HepG2 (cell line): ENCODE measurements at regions of chr10 and their contacts with region 1.

Region 1: DNA sequence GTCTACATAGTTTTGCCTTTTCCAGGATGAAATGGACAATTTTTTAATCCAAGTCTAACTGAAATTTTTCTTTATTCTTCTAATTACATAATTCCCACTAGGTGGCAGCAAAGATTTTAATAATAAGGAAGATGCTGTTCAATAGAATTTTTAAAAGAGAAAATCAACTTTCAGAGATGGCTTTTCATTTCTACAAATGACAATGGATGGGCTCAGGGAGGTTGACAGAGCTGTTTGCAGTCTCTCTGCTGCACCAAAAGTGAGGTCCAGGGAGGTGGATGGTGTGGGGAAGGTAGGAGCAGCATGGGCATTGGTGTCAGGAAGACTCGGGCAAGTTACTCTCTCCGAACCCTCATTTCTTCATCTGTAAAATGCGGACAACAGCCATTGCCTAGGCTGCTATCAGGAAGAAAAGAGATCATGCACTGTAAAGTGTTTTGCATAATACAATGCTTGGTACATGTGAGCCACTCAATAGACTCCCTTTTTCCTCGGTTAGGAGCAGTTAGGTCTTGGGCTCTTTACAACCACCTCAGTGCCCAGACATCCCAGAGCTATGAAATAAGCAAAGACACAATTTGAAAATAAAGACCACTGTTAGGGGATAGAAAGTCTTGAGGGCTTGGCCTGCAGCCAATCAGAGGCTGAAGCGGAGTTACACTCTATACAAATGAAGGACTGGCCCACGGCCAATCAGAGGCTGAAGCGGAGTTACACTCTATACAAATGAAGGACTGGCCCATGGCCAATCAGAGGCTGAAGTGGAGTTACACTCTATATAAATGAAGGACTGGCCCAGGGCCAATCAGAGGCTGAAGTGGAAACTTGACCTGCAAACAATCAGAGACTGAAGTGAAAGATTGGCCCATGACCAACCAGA is 107.1 kb downstream of the ABLIM1 start:
- DNase-seq: peak; percentile 30
- ATAC-seq: no peak
- H3K4me3 ChIP-seq: no peak overlapping the region
- H3K27ac ChIP-seq: no peak overlapping the region
- H3K4me1 ChIP-seq: peaks cover 15% of the 10 kb centered on the region
- H3K27me3 ChIP-seq: no peaks in the 10 kb centered on the region
- CTCF ChIP-seq: peak; percentile 49; the same call in 1 of the 2 replicates
- EP300 ChIP-seq: no peak
- POLR2A ChIP-seq: no peak
- RAD21 ChIP-seq: peak; percentile 31; the same call in 1 of the 2 replicates

Region 2: DNA sequence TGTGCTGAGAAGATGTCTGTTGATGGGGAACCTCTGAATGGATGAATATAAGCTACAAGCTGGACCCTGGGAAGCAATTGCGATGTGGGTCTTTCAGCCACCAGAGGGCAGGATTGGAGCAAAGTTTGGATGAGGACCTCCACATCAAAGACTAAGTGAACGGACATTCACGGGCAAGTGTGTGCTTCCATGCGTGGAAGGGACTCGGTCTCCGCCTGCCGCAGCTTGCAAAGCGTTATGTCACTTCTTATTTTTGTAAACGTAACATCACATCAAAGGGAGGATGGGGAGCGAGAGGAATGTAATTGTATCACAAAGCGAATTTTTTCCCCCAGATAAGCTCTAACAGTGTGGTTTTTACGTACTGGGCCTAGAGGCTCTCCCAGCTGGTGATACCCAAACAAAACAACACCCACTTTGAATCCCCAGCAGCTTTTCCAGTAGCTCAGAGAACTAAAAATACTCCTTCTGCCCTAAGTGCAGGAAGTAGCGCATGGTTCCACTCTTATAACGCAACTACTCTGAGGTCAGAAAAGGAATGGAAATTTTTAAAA is 246.9 kb before region 1 on chr10:
- CTCF ChIA-PET with region 1: interaction called, 9 read pairs
- POLR2A ChIA-PET with region 1: no interaction called
- in situ Hi-C with region 1: loop called (anchors 5 kb)
- intact Hi-C with region 1: loop called (anchors 1 kb)
- DNase-seq: peak; percentile 62
- ATAC-seq: peak; percentile 86
- H3K4me3 ChIP-seq: no peak overlapping the region
- H3K27ac ChIP-seq: no peak overlapping the region
- H3K4me1 ChIP-seq: peaks cover 5% of the 10 kb centered on the region; the same call in 1 of the 2 replicates
- H3K27me3 ChIP-seq: peaks cover 2 to 46% of the 10 kb centered on the region in 2 experiments
- CTCF ChIP-seq: peak; percentile 89
- EP300 ChIP-seq: no peak
- POLR2A ChIP-seq: no peak
- RAD21 ChIP-seq: peak; percentile 68

Region 3: DNA sequence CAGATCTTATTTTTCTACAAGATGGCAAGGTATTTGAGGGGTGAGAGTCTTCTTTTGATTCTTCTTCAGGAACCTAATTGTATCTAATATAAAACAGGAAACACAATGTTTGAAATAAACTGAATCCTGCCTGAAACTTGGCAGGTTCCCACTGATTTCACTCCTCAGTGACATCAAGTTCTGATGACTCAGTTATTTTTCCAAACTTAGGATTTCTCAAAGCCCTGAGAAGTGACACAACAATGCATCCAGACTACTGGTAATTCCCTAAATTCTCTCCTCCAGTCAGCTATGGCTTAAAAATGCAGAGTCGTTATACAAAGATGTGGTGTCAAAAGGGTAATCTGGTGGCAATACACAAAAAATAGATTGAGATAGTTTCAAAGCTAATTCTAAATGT is 26.1 kb after region 1 on chr10:
- CTCF ChIA-PET with region 1: no interaction called
- POLR2A ChIA-PET with region 1: no interaction called
- in situ Hi-C with region 1: no loop called
- intact Hi-C with region 1: no loop called
- DNase-seq: no peak
- ATAC-seq: no peak
- H3K4me3 ChIP-seq: no peak overlapping the region
- H3K27ac ChIP-seq: no peak overlapping the region
- H3K4me1 ChIP-seq: no peaks in the 10 kb centered on the region
- H3K27me3 ChIP-seq: no peaks in the 10 kb centered on the region
- CTCF ChIP-seq: no peak
- EP300 ChIP-seq: no peak
- POLR2A ChIP-seq: no peak
- RAD21 ChIP-seq: no peak

Region 4: DNA sequence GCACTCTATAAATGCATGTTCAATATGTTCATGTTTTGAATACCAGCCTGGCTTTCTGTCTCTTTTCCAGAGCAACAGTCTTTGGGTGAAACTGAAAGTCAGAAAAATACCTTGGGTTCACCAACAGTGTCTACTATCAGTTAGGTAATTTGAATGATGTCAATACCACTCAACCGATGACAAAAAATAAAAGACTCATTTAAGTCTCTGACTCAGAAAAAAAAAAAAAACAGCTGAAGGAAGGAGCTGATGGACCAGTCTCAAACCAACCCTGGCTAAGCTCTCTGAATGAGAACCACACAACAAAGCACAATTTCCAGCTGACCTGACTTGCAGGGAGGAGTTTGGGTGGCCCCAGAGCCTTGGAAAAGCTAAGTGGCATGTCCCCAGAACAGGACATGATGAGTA is 64.6 kb after region 1 on chr10:
- CTCF ChIA-PET with region 1: no interaction called
- POLR2A ChIA-PET with region 1: no interaction called
- in situ Hi-C with region 1: no loop called
- intact Hi-C with region 1: no loop called
- DNase-seq: no peak
- ATAC-seq: no peak
- H3K4me3 ChIP-seq: no peak overlapping the region
- H3K27ac ChIP-seq: no peak overlapping the region
- H3K4me1 ChIP-seq: peaks cover 33% of the 10 kb centered on the region
- H3K27me3 ChIP-seq: no peaks in the 10 kb centered on the region
- CTCF ChIP-seq: no peak
- EP300 ChIP-seq: no peak
- POLR2A ChIP-seq: no peak
- RAD21 ChIP-seq: no peak

Region 5: DNA sequence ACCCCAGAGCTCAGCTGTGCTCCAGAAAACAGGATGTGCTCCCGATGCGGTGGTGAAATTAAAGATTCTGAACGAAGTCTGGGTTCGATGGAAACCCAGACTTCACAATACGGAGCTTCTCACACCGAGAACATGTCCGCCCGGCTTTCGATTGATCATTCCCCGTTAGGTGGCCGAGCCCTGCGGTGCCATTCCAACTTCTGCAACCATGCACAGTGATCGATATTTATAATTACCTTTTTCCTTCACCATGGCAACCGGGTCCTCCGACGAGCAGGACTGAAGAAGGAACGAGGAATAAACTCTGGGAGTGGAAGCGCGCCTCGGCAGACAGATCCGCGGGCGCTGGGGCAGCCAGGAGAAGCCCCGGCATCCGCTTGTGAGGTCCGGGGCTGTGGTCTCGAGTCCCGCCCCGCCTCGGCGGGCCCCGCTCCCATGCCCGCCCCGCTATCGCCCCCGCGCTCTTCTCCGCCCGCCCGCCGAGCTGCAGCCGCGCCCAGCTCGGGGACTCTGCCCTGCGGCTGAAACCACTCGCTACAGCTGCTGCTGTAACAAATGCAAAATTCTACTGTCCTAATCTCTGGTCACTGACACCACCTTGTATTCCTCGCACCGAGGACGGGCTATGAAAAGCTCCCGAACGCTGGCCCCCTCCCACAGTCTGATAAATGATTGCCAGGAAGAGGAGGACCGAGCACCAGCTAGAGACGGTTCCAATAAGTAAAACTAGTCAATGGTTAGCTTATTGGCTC is 80.8 kb after region 1 on chr10:
- CTCF ChIA-PET with region 1: no interaction called
- POLR2A ChIA-PET with region 1: no interaction called
- in situ Hi-C with region 1: no loop called
- intact Hi-C with region 1: loop called (anchors 5 kb)
- DNase-seq: peak; percentile 76
- ATAC-seq: peak; percentile 95
- H3K4me3 ChIP-seq: peak overlapping the region; percentile 62 to 71 (median 64)
- H3K27ac ChIP-seq: peak overlapping the region; percentile 10
- H3K4me1 ChIP-seq: peaks cover 50% of the 10 kb centered on the region
- H3K27me3 ChIP-seq: peaks cover 0 to 15% of the 10 kb centered on the region in 2 experiments; a peak in 2 of 5 replicates
- CTCF ChIP-seq: peak; percentile 18; the same call in 1 of the 2 replicates
- EP300 ChIP-seq: no peak
- POLR2A ChIP-seq: no peak
- RAD21 ChIP-seq: no peak

Region 6: GRCh38 chr10:114703377-114704107 is 152.5 kb after region 1 on chr10:
- CTCF ChIA-PET with region 1: interaction called, 32 read pairs
- POLR2A ChIA-PET with region 1: no interaction called
- in situ Hi-C with region 1: no loop called
- intact Hi-C with region 1: loop called (anchors 1 kb)
- DNase-seq: peak; percentile 13
- ATAC-seq: peak; percentile 53
- H3K4me3 ChIP-seq: no peak overlapping the region
- H3K27ac ChIP-seq: no peak overlapping the region
- H3K4me1 ChIP-seq: no peaks in the 10 kb centered on the region
- H3K27me3 ChIP-seq: 0 out of 5 replicates have a peak, but pooled peaks cover 0 to 4% of the 10 kb centered on the region in 2 experiments
- CTCF ChIP-seq: peak; percentile 75
- EP300 ChIP-seq: no peak
- POLR2A ChIP-seq: no peak
- RAD21 ChIP-seq: peak; percentile 64

Region 7: GRCh38 chr10:115129752-115130151 is 578.8 kb after region 1 on chr10:
- CTCF ChIA-PET with region 1: no interaction called
- POLR2A ChIA-PET with region 1: no interaction called
- in situ Hi-C with region 1: no loop called
- intact Hi-C with region 1: loop called (anchors 2 kb)
- DNase-seq: peak; percentile 10
- ATAC-seq: no peak
- H3K4me3 ChIP-seq: no peak overlapping the region
- H3K27ac ChIP-seq: no peak overlapping the region
- H3K4me1 ChIP-seq: no peaks in the 10 kb centered on the region
- H3K27me3 ChIP-seq: no peaks in the 10 kb centered on the region
- CTCF ChIP-seq: no peak
- EP300 ChIP-seq: no peak
- POLR2A ChIP-seq: no peak
- RAD21 ChIP-seq: no peak